ENCODE measurements at regions of chr12 and their contacts with region 1.

Region 1: GRCh38 chr12:119594772-119595445 is 1.3 kb downstream of the TMEM233 start:
- DNase-seq: no peak
- ATAC-seq: no peak
- H3K4me3 ChIP-seq: no peak overlapping the region
- H3K4me3 Mint-ChIP-seq: no peak overlapping the region
- H3K27ac ChIP-seq: no peak overlapping the region
- H3K27ac Mint-ChIP-seq: no peak overlapping the region
- H3K4me1 ChIP-seq: no peaks in the 10 kb centered on the region
- H3K4me1 Mint-ChIP-seq: peaks cover 0 to 23% of the 10 kb centered on the region in 2 donors
- H3K27me3 ChIP-seq: peaks cover 21% of the 10 kb centered on the region
- H3K27me3 Mint-ChIP-seq: peaks cover 58 to 91% of the 10 kb centered on the region in 2 donors
- CTCF ChIP-seq: no peak

Region 2: GRCh38 chr12:119544765-119545625 is 49.9 kb before region 1 on chr12:
- intact Hi-C with region 1: no loop called
- DNase-seq: peak; percentile 21 to 75
- ATAC-seq: peak; percentile 54 to 84 (median 71)
- H3K4me3 ChIP-seq: no peak overlapping the region
- H3K4me3 Mint-ChIP-seq: no peak overlapping the region
- H3K27ac ChIP-seq: no peak overlapping the region
- H3K27ac Mint-ChIP-seq: no peak overlapping the region
- H3K4me1 ChIP-seq: no peaks in the 10 kb centered on the region
- H3K4me1 Mint-ChIP-seq: no peaks in the 10 kb centered on the region
- H3K27me3 ChIP-seq: no peaks in the 10 kb centered on the region
- H3K27me3 Mint-ChIP-seq: peaks cover 25 to 26% of the 10 kb centered on the region in 2 donors
- CTCF ChIP-seq: peak; percentile 85

Region 3: GRCh38 chr12:119565404-119565803 is 29.5 kb before region 1 on chr12:
- intact Hi-C with region 1: loop called (anchors 1 kb)
- DNase-seq: no peak
- ATAC-seq: no peak
- H3K4me3 ChIP-seq: no peak overlapping the region
- H3K4me3 Mint-ChIP-seq: no peak overlapping the region
- H3K27ac ChIP-seq: no peak overlapping the region
- H3K27ac Mint-ChIP-seq: no peak overlapping the region
- H3K4me1 ChIP-seq: no peaks in the 10 kb centered on the region
- H3K4me1 Mint-ChIP-seq: no peaks in the 10 kb centered on the region
- H3K27me3 ChIP-seq: no peaks in the 10 kb centered on the region
- H3K27me3 Mint-ChIP-seq: peaks cover 6 to 25% of the 10 kb centered on the region in 2 donors
- CTCF ChIP-seq: no peak

Region 4: DNA sequence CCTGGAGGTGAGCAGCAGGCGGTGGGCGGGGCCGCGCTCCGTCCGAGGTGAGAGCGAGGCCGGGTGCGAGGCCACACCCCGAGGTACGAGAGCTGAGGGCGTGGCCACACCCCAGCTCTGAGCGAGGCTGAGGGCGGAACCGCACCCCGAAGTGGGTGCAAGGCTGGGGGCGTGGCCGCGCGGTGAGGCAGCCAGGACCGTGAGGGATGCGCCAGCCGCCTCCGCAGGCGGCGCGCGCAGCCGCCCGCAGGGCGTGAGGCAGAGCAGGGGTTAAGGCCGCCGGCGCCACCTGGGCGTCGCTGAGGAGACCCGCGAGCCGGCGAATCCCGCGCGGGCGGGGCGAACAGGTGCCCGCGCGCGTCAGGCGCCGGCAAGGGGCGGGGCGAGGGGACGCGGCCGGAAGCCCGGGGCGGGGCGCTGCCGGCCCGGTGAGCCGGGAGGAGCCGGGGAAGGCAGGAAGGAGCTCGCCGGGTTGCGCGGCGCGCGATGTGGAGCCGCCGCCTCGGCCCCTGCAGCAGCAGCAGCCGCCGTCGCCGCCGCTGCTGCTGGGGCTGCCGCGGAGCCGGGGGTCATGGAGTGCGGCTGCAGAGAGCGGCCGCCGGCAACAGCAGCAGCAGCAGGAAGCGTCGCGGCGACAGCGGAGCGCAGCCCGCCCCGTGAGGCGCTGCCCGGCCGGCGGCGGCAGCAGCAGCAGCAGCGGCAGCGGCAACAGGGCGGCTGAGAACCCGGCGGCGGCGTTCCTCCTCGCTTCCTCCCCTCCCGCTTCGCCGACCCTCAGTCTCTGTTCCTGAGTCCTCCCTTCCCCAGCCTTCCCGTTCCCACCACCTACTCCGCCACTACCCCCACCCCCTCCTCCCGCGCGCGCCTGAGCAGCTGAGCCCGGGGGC is 394.1 kb after region 1 on chr12 and contains the start of gene BICDL1:
- intact Hi-C with region 1: no loop called
- DNase-seq: peak; percentile 79 to 100
- ATAC-seq: peak; percentile 75 to 90 (median 77)
- H3K4me3 ChIP-seq: peak within 1 kb of the TSS; percentile 43
- H3K4me3 Mint-ChIP-seq: peak within 1 kb of the TSS; percentile 86
- H3K27ac ChIP-seq: peak within 1 kb of the TSS; percentile 64
- H3K27ac Mint-ChIP-seq: peak within 1 kb of the TSS; percentile 68 to 83
- H3K4me1 ChIP-seq: peaks cover 18% of the 10 kb centered on the region
- H3K4me1 Mint-ChIP-seq: peaks cover 6 to 15% of the 10 kb centered on the region in 2 donors
- H3K27me3 ChIP-seq: no peaks in the 10 kb centered on the region
- H3K27me3 Mint-ChIP-seq: peaks cover under 1 to 2% of the 10 kb centered on the region in 2 donors
- CTCF ChIP-seq: no peak
- total RNA-seq, gene BICDL1: 29.3 to 37.1 (median 34.3) TPM

Measured in natural killer cell (primary cell).